Heart left ventricle (tissue), 16 donors: ENCODE measurements at regions of chr4 and their contacts with region 1.

Region 1: DNA sequence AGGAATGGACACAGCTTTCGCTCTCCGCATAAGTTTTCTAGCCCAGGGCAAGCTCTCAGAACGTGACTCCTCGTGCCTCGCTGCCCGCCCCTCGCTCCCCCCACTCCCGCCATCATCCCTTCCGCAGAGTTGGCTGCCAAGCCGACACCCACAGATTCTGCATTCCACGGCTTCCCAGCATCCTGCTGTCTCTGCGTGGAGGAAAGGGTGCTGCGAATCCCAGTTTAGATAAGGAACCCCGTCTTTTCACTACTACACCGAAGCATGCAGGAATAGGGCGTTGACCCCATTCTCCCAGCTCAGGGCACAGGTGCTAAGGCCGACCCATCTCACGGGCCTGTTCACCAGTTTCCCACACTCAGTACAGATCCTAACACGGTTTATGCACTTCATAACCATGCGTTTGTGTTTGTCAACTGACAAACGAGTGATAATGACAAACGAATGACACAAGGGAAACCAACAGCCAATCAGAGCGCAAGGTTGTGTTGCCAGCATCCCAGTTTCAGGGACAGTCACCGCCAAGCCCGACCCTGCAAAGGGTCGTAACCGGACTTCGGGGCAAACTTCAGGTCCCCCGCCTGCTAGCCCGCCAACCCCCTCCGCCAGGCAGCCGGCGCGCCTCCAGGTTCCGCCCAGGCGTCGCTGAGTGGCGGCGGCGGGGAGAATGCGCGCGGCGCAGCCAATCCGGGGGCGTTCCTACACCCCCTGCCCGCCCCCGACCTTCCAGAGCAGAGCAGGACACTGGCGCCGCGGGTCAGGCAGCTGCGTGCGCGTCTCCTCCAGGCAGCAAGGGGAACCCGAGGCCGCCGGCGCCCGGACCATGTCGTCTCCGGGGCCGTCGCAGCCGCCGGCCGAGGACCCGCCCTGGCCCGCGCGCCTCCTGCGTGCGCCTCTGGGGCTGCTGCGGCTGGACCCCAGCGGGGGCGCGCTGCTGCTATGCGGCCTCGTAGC is at the start of gene CYP2U1:
- DNase-seq: peak; percentile 91 to 94 (median 91)
- ATAC-seq: peak; percentile 96 to 99 (median 98)
- H3K4me3 ChIP-seq: peak within 1 kb of the TSS; percentile 56 to 95 (median 79)
- H3K27ac ChIP-seq: peak within 1 kb of the TSS; percentile 57 to 91 (median 82)
- H3K4me1 ChIP-seq: peaks cover 0 to 34% (median 11%) of the 10 kb centered on the region in 12 donors
- H3K27me3 ChIP-seq: no peaks in the 10 kb centered on the region
- CTCF ChIP-seq: peak in 8 of 12 donors; percentile 11 to 44 (median 26)
- POLR2A ChIP-seq: peak; percentile 54 to 79
- total RNA-seq, gene CYP2U1: 5.5 to 11.8 (median 6.9) TPM

Region 2: GRCh38 chr4:107996949-107997788 is 66.1 kb after region 1 on chr4:
- intact Hi-C with region 1: loop called in 2 of 10 experiments (anchors 2 to 5 kb)
- DNase-seq: peak in 4 of 5 donors; percentile 55 to 70 (median 60)
- ATAC-seq: peak; percentile 86 to 96 (median 93)
- H3K4me3 ChIP-seq: no peak overlapping the region
- H3K27ac ChIP-seq: peak overlapping the region; percentile 71 to 97 (median 90)
- H3K4me1 ChIP-seq: peaks cover 0 to 89% (median 45%) of the 10 kb centered on the region in 12 donors
- H3K27me3 ChIP-seq: no peaks in the 10 kb centered on the region
- CTCF ChIP-seq: no peak
- POLR2A ChIP-seq: peak in 1 of 2 donors; percentile 12